GM23248 (cell line): ENCODE measurements at regions of chr12 and their contacts with region 1.

Region 1: DNA sequence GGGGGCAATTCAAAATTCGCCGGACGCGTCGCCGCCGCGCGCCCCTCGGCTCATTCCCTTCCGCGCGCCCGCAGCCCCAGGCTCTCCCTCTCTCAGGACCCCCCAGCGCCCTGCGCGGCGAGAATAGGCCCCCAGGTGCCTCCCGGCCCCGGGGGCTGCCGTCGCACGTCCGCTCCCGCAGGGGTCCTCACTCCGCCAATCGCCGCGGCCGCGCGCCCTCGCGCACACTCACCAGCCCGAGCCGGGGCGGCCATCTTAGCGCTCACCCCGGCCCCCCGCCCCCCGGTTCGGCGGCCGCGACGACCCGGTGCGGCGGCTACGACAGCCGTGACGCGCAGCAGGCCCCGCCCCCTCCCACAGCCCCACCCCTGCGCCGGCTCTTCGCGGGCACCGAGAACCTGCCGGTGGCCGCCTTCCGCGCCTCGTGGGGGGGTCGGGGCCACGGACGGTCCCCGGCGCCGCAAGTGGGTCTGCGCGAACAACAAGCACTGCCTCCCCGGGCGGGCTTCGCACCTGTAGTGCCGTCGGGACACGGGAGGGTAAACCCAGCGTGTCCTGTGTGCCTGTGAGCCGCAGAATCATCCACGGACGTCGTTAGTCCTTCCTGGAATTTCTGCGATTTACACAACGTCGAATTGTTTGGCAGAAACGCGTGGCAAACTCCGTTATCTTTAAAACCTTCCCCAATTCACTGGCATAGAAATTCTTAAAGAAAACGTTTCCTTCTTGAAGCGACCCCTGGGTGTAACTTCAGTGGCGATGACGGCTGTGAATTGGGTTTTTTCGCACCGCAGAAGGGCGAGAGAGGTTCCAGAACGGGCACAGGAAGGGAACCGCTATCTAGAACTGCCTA is 2.5 kb downstream of the USP44 start:
- DNase-seq: peak; percentile 48
- H3K4me3 ChIP-seq: peak overlapping the region; percentile 71
- H3K27ac ChIP-seq: no peak overlapping the region
- H3K4me1 ChIP-seq: peaks cover 7% of the 10 kb centered on the region; the same call in 1 of the 2 replicates
- H3K27me3 ChIP-seq: peaks cover 27% of the 10 kb centered on the region

Region 2: GRCh38 chr12:95117178-95117599 is 431.6 kb before region 1 on chr12:
- in situ Hi-C with region 1: loop called (anchors 25 kb)
- DNase-seq: peak; percentile 83
- H3K4me3 ChIP-seq: no peak overlapping the region
- H3K27ac ChIP-seq: no peak overlapping the region
- H3K4me1 ChIP-seq: peaks cover 36% of the 10 kb centered on the region
- H3K27me3 ChIP-seq: no peaks in the 10 kb centered on the region

Region 3: GRCh38 chr12:95446506-95446900 is 102.3 kb before region 1 on chr12:
- in situ Hi-C with region 1: no loop called
- DNase-seq: no peak
- H3K4me3 ChIP-seq: no peak overlapping the region
- H3K27ac ChIP-seq: no peak overlapping the region
- H3K4me1 ChIP-seq: no peaks in the 10 kb centered on the region
- H3K27me3 ChIP-seq: 0 out of 2 replicates have a peak, but pooled peaks cover 9% of the 10 kb centered on the region

Region 4: GRCh38 chr12:95709152-95709551 is 160.4 kb after region 1 on chr12:
- in situ Hi-C with region 1: no loop called
- DNase-seq: no peak
- H3K4me3 ChIP-seq: no peak overlapping the region
- H3K27ac ChIP-seq: no peak overlapping the region
- H3K4me1 ChIP-seq: no peaks in the 10 kb centered on the region
- H3K27me3 ChIP-seq: peaks cover 12% of the 10 kb centered on the region; the same call in 1 of the 2 replicates

Region 5: GRCh38 chr12:96233939-96234461 is 685.2 kb after region 1 on chr12:
- in situ Hi-C with region 1: no loop called
- DNase-seq: peak; percentile 99
- H3K4me3 ChIP-seq: no peak overlapping the region
- H3K27ac ChIP-seq: peak overlapping the region; percentile 99
- H3K4me1 ChIP-seq: peaks cover 57% of the 10 kb centered on the region
- H3K27me3 ChIP-seq: no peaks in the 10 kb centered on the region